IMR-90 (cell line): ENCODE measurements at regions of chr3 and their contacts with region 1.

Region 1: GRCh38 chr3:69084326-69085167 is at the start of gene ARL6IP5:
- DNase-seq: peak; percentile 93
- ATAC-seq: peak; percentile 44
- H3K4me3 ChIP-seq: peak within 1 kb of the TSS; percentile 87
- H3K27ac ChIP-seq: peak within 1 kb of the TSS; percentile 86
- H3K4me1 ChIP-seq: peaks cover 10% of the 10 kb centered on the region
- H3K27me3 ChIP-seq: no peaks in the 10 kb centered on the region
- CTCF ChIP-seq: no peak
- POLR2A ChIP-seq: no peak
- RAD21 ChIP-seq: no peak
- total RNA-seq, gene ARL6IP5: 98.8 and 126 TPM in 2 replicates

Region 2: DNA sequence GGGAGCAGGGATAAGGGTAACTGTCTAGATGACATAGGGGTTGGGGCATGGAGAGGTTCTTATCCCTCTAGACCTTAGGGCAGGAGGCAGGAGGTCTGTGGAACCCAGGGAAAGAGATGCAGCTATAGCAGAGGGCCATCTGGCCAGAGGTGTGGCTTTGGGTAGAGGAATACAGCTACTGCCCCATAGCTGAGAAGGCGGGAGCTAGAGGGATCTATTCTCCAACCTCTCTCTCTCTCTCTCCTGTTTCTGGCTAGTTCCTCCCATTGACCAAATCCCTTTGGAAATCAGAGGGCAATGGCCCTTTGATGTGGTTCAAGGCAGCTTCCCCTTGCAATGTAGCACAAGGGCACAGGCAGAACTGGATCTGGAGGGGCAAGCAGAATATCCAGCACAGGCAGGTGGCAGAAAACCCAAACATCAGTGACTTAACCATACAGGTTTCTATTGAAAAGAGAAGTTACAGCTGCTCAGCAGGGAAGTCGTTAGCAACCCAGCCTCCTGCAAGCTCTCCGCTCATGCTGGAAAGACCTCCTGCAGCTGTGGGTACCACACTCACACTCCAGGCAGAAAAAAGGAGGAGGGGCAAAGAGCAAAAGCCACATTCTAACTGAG is 60.2 kb after region 1 on chr3:
- CTCF ChIA-PET with region 1: no interaction called
- POLR2A ChIA-PET with region 1: no interaction called
- dilution Hi-C with region 1: no loop called
- in situ Hi-C with region 1: no loop called
- intact Hi-C with region 1: no loop called
- DNase-seq: no peak
- ATAC-seq: no peak
- H3K4me3 ChIP-seq: no peak overlapping the region
- H3K27ac ChIP-seq: no peak overlapping the region
- H3K4me1 ChIP-seq: peaks cover 2% of the 10 kb centered on the region; the same call in 1 of the 2 replicates
- H3K27me3 ChIP-seq: peaks cover 20% of the 10 kb centered on the region
- CTCF ChIP-seq: no peak
- POLR2A ChIP-seq: no peak
- RAD21 ChIP-seq: no peak

Region 3: GRCh38 chr3:69865920-69866679 is 781.6 kb after region 1 on chr3:
- CTCF ChIA-PET with region 1: no interaction called
- POLR2A ChIA-PET with region 1: no interaction called
- dilution Hi-C with region 1: no loop called
- in situ Hi-C with region 1: no loop called
- intact Hi-C with region 1: loop called (anchors 10 kb)
- DNase-seq: peak; percentile 23
- ATAC-seq: peak; percentile 5
- H3K4me3 ChIP-seq: peak overlapping the region; percentile 20; the same call in 1 of the 2 replicates
- H3K27ac ChIP-seq: peak overlapping the region; percentile 97
- H3K4me1 ChIP-seq: peaks cover 36% of the 10 kb centered on the region
- H3K27me3 ChIP-seq: no peaks in the 10 kb centered on the region
- CTCF ChIP-seq: no peak
- POLR2A ChIP-seq: no peak
- RAD21 ChIP-seq: no peak